ENCODE measurements at regions of chr12 and their contacts with region 1.

Region 1: GRCh38 chr12:3202734-3203446 is 125.7 kb downstream of the TSPAN9 start:
- DNase-seq: peak; percentile 74
- ATAC-seq: peak; percentile 68
- H3K4me3 Mint-ChIP-seq: no peak overlapping the region
- H3K27ac Mint-ChIP-seq: no peak overlapping the region
- H3K4me1 Mint-ChIP-seq: peaks cover 3% of the 10 kb centered on the region
- H3K27me3 Mint-ChIP-seq: peaks cover 35% of the 10 kb centered on the region
- CTCF ChIP-seq: peak; percentile 95

Region 2: GRCh38 chr12:3073438-3074250 is 129.2 kb before region 1 on chr12:
- CTCF ChIA-PET with region 1: interaction called, 16 read pairs
- POLR2A ChIA-PET with region 1: no interaction called
- intact Hi-C with region 1: loop called (anchors 5 kb)
- DNase-seq: peak; percentile 89
- ATAC-seq: peak; percentile 65
- H3K4me3 Mint-ChIP-seq: no peak overlapping the region
- H3K27ac Mint-ChIP-seq: no peak overlapping the region
- H3K4me1 Mint-ChIP-seq: peaks cover 6% of the 10 kb centered on the region
- H3K27me3 Mint-ChIP-seq: peaks cover 18% of the 10 kb centered on the region
- CTCF ChIP-seq: peak; percentile 98

Region 3: DNA sequence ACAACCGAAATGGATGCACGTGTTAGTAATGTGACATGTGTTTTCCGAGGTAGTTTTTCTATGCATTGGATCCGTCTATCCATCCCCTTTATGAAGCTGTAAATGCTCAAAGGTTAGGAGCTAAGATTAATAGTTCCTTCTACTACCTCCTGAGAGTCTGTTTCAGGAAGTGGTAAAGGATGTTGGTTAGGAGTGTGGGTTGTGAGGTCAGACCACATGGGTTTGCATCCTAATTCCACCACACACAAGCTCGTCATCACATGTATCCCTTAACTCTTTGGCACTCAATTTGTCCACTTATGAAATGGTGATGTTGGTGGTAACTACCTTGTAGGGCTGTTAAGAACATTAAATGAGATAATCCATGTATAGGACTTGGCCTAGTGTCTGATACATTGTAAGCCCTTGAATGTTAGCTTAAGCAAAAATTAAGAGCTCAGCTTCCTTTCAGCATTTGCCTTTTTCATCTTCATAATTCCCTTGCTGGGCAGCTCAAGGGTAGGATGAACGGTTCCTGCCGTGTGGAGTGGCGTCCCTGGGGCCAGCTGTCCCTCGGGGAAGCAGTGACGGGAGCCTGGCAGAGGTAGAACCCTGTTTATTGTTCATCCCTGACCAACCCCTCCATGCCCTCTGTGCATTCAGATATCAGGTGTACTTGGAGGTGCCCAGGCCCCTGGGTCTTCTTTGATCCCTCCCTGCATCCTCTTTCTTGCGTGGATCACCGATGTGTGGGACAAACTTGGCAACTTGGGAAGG is 73.4 kb before region 1 on chr12:
- CTCF ChIA-PET with region 1: interaction called, 11 read pairs
- POLR2A ChIA-PET with region 1: no interaction called
- intact Hi-C with region 1: loop called (anchors 2 kb)
- DNase-seq: peak; percentile 42
- ATAC-seq: peak; percentile 45
- H3K4me3 Mint-ChIP-seq: no peak overlapping the region
- H3K27ac Mint-ChIP-seq: no peak overlapping the region
- H3K4me1 Mint-ChIP-seq: peaks cover 18% of the 10 kb centered on the region
- H3K27me3 Mint-ChIP-seq: peaks cover 49% of the 10 kb centered on the region
- CTCF ChIP-seq: no peak

Region 4: GRCh38 chr12:3135522-3136461 is 67.1 kb before region 1 on chr12:
- CTCF ChIA-PET with region 1: interaction called, 17 read pairs
- POLR2A ChIA-PET with region 1: no interaction called
- intact Hi-C with region 1: loop called (anchors 2 kb)
- DNase-seq: peak; percentile 49
- ATAC-seq: peak; percentile 86
- H3K4me3 Mint-ChIP-seq: no peak overlapping the region
- H3K27ac Mint-ChIP-seq: no peak overlapping the region
- H3K4me1 Mint-ChIP-seq: no peaks in the 10 kb centered on the region
- H3K27me3 Mint-ChIP-seq: peaks cover 22% of the 10 kb centered on the region
- CTCF ChIP-seq: peak; percentile 68

Region 5: DNA sequence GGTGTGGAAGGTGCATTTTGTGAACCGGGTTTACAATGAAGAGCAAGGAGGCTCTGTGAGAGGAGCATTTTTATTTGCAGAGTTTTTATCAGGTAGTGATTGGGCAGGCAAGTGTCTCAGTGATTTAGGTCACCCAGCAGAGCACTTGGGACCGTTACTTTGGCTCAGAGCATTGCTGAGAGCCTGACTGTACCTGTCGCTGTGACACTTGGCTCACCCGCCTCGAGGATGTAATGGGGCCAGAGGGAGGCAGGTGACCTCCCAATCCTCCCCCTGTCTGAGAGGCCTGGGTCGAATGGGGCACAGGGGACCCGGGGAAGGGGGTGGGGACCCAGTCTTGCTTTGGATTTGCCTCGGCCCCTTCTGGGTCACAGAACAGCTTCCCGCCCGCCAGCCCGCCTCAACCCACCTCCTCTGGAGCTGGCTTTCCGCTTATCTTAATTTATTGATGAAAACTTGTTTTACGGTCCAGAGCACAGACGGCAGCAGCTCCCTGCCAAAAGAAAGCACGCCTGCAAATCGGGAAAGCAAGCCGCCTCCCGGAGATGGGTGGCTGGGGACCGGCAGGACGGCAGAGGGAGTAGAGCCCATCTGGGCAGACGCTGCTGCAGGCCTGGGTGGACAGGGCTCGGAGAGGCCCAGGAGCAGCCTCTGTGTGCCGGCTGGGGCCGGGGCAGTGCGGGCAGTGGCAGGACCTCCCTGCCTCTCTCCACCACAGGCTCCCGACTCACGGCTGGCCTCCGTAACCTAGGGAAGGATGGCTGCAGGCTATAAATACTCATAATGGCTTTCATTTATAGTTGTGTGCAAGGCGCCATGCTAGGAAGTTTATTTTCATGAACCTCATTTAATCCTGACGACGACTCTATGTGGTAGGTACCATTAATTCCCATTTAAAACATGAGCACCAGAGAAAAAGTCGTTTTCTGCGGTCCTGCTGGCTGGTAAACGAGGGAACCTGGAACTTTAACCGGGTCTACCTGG is 61.3 kb after region 1 on chr12:
- CTCF ChIA-PET with region 1: no interaction called
- POLR2A ChIA-PET with region 1: no interaction called
- intact Hi-C with region 1: no loop called
- DNase-seq: no peak
- ATAC-seq: no peak
- H3K4me3 Mint-ChIP-seq: no peak overlapping the region
- H3K27ac Mint-ChIP-seq: no peak overlapping the region
- H3K4me1 Mint-ChIP-seq: no peaks in the 10 kb centered on the region
- H3K27me3 Mint-ChIP-seq: no peaks in the 10 kb centered on the region
- CTCF ChIP-seq: no peak

Region 6: DNA sequence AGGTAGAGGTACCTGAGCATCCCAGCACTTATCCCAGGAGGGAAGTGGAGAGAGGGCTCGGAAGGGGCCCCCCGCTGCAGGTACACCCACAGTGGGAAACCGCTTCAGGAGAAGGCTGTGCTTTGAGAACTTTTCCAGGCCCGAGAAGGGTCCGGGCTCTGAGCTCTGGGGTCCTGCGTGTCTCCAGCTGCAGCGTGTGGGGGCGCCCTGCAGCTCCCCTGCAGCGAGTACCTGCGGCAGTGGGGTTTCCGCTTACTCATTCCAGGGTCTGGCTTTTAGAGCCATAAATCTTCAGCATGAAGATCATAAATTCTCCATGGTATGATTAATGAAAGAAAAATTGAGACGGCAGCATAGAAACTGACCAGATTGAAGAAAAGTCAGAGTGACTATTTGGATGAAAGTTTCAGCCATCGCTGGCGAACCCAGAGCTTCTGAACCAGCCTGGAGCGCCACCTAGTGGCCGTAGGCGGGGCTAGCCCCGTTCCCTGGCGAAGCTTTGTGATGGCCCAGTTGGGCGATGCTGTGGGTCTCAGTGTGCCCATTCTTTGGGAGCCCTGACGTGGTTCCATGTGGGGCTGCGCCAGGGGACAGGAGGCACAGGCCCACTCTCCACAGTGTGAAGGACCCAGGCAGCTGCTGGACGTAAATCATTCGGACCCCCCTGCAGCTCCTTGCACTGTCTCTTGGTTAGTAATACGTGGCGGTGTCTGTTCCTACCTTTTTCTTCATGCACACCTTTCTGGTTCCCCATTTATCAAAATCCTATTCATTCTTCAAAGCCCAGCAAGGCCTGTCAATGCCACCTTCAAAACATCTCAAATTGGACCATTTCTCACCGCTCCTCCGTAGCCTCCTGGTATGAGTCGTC is 72.5 kb after region 1 on chr12:
- CTCF ChIA-PET with region 1: interaction called, 16 read pairs
- POLR2A ChIA-PET with region 1: no interaction called
- intact Hi-C with region 1: no loop called
- DNase-seq: peak; percentile 81
- ATAC-seq: peak; percentile 85
- H3K4me3 Mint-ChIP-seq: no peak overlapping the region
- H3K27ac Mint-ChIP-seq: no peak overlapping the region
- H3K4me1 Mint-ChIP-seq: peaks cover 3% of the 10 kb centered on the region
- H3K27me3 Mint-ChIP-seq: peaks cover 5% of the 10 kb centered on the region
- CTCF ChIP-seq: peak; percentile 95

Measured in activated CD8-positive, alpha-beta T cell treated with anti-CD3 and anti-CD28 coated beads for 36 hours (primary cell).